OCI-LY7 (cell line): ENCODE measurements at regions of chr12 and their contacts with region 1.

Region 1: GRCh38 chr12:96219698-96220206 is 25.6 kb downstream of the ELK3 start:
- DNase-seq: no peak
- H3K4me3 ChIP-seq: no peak overlapping the region
- H3K27ac ChIP-seq: no peak overlapping the region
- H3K4me1 ChIP-seq: peaks cover 9% of the 10 kb centered on the region
- CTCF ChIP-seq: no peak

Region 2: DNA sequence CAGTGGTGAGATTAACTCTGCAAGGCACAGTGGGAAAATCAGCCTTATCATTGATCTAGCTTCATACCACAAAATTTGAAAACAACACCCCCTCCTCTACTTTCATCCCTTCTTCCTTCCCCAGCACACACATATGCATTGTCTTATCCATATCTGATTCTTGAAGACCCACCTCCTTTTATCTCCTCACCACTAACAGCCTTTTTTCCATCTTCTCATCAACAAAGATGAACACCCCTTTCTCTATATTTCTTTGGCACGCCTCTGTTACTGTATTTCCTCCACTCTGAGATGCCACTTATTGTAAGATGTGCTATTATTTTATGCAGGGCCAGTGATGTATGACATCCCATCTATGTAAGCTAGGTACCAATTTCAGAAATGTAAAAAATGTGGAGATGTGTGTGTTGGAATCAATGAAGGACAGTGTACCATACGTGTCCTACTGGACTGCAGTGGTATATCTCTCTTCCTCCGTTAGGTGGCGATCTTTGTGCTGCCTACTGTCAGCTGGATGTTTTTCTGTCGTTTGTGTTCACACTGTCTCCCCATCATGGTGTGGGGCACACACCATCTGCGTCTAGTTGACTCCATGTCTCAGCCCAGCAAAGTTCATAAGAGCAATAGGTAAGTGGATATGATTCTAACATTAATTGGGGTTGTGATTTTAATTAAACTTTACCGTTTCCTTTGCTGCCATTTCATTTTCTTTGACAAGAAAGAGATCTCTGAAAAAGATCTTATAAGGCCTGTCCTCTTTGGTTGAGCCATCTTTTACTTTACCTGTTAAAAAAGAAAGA is 301.4 kb before region 1 on chr12:
- CTCF ChIA-PET with region 1: no interaction called
- POLR2A ChIA-PET with region 1: no interaction called
- intact Hi-C with region 1: loop called (anchors 1 kb)
- DNase-seq: peak; percentile 75
- H3K4me3 ChIP-seq: no peak overlapping the region
- H3K27ac ChIP-seq: no peak overlapping the region
- H3K4me1 ChIP-seq: peaks cover 4% of the 10 kb centered on the region
- CTCF ChIP-seq: peak; percentile 93

Region 3: GRCh38 chr12:96061864-96062453 is 157.8 kb before region 1 on chr12:
- CTCF ChIA-PET with region 1: interaction called, 7 read pairs
- POLR2A ChIA-PET with region 1: interaction called, 6 read pairs
- intact Hi-C with region 1: loop called (anchors 1 kb)
- DNase-seq: peak; percentile 87
- H3K4me3 ChIP-seq: no peak overlapping the region
- H3K27ac ChIP-seq: no peak overlapping the region
- H3K4me1 ChIP-seq: peaks cover 6% of the 10 kb centered on the region
- CTCF ChIP-seq: peak; percentile 91

Region 4: DNA sequence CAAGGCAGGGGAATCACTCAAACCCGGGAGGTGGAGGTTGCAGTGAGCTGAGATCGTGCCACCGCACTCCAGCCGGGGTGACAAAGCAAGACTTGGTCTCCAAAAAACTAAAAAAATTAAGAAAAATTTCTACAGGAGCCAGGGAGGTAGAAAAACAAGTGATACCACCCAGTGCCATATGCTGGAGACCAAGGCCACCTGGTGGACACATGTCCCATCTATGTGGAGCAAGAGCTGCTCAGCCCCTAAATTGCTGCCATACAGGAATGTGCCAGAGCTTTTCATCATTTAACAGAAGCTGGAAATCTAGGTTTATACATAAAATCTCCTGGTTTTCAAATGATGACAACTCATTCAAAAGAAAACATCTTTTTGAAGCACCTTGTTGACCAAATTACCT is 86.9 kb before region 1 on chr12:
- CTCF ChIA-PET with region 1: no interaction called
- POLR2A ChIA-PET with region 1: interaction called, 3 read pairs
- intact Hi-C with region 1: loop called (anchors 5 kb)
- DNase-seq: no peak
- H3K4me3 ChIP-seq: no peak overlapping the region
- H3K27ac ChIP-seq: no peak overlapping the region
- H3K4me1 ChIP-seq: no peaks in the 10 kb centered on the region
- CTCF ChIP-seq: peak; percentile 34; the same call in 1 of the 2 replicates

Region 5: DNA sequence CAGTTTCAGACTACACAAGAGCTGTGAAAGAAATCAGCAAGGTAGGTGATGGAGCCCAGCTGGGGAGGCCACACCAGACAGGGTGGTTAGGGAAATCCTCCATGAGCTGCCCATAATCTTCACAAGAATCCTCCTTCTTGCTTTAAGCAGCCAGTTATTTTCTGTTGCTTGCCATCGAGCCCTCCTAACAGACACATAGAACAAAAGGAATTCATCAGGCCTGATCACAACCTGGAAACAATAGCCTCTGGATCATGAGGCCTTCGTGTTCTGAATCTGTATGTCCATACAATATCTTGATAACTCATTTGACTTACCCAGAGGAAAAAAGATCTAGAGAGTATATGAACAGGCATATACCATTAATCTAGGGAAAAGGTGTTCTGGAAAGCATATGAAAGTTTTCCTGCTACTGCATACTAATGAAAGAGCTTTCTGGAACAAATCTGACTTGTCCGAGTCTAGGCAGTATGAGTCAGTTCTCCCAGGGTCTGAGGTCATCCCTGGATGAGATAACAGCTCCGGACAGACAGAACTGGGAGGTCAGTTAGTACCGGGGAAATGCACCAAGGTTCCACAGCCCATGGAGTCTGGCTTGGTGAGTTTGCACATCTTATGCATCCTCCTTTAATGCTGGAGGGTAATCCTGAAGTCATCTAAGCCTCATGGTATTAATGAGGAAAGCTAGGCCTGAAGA is 78.4 kb before region 1 on chr12:
- CTCF ChIA-PET with region 1: no interaction called
- POLR2A ChIA-PET with region 1: interaction called, 11 read pairs
- intact Hi-C with region 1: no loop called
- DNase-seq: no peak
- H3K4me3 ChIP-seq: no peak overlapping the region
- H3K27ac ChIP-seq: no peak overlapping the region
- H3K4me1 ChIP-seq: peaks cover 9% of the 10 kb centered on the region
- CTCF ChIP-seq: no peak

Region 6: DNA sequence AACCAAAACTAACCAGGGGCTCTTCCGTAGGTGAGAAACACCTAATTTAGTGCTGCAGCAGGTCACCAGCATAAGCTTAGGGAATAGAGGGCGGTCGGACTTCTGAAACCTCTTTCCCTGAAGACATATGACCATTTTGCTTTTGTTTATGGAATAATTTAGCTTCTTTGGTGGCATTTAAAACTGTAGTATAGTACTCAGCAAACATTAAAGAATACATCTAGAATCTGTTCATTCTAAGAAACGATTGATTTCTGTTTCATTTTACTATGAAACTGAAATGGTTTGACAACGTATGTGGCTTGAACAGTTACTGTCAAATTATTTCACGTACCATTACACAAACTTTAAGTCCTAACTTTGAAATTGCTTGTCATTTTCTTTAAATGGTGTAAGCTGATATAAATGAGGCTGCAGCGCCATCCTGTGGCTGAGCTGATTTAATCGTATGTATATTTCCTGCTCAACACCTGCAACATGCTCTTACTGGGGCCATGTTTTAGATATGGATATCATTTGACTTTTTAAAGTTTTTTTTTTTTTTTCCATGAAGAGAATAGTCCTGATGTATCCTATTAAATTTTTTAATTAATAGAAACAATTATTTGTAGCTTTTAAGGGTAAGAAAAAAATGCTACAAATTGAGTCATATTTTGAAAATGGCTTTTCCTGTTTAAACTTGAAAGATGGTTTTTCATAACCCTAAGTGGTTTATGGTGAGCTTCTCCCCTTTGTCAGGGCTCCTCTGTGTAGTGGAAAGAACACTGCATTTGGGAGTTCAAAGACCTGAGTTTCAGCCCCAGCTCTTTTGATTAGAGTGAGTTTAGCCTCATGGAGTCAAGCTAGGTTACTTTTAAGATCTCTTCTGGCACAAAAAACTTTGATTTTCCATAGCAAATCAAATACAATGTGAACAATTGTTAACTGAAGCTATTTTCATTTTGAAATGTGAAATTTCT is 297.0 kb after region 1 on chr12:
- CTCF ChIA-PET with region 1: interaction called, 10 read pairs
- POLR2A ChIA-PET with region 1: interaction called, 6 read pairs
- intact Hi-C with region 1: loop called (anchors 1 kb)
- DNase-seq: peak; percentile 85
- H3K4me3 ChIP-seq: no peak overlapping the region
- H3K27ac ChIP-seq: no peak overlapping the region
- H3K4me1 ChIP-seq: peaks cover 14% of the 10 kb centered on the region
- CTCF ChIP-seq: peak; percentile 93

Region 7: DNA sequence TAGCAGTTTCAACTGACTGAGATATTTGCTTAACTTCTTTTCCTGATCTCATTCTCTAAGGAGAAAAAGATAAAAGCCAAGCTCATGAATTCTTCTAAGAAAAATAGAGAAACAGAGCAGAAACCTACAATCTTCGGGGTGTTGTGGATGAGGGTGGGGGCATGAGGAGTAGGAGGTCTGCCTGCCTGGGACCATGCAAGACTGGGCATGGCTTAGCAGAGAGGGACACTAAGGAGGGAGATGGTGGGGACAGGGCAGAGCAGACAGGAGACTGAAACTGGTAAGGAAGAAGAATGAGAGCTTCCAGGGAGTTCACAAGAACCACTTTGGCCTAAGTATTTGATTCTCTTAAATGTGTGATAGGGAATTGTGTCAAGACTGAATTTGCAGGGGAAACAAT is 457.6 kb after region 1 on chr12:
- CTCF ChIA-PET with region 1: no interaction called
- POLR2A ChIA-PET with region 1: no interaction called
- intact Hi-C with region 1: no loop called
- DNase-seq: no peak
- H3K4me3 ChIP-seq: no peak overlapping the region
- H3K27ac ChIP-seq: no peak overlapping the region
- H3K4me1 ChIP-seq: no peaks in the 10 kb centered on the region
- CTCF ChIP-seq: no peak